CD8-positive, alpha-beta memory T cell (primary cell): ENCODE measurements at regions of chr10 and their contacts with region 1.

Region 1: GRCh38 chr10:122953827-122954730 is at the start of gene C10orf88:
- DNase-seq: peak; percentile 94 to 99 (median 96)
- H3K4me3 ChIP-seq: peak within 1 kb of the TSS; percentile 62
- H3K4me3 Mint-ChIP-seq: peak within 1 kb of the TSS; percentile 85 to 93 (median 91)
- H3K27ac ChIP-seq: peak within 1 kb of the TSS; percentile 8
- H3K27ac Mint-ChIP-seq: peak within 1 kb of the TSS; percentile 52 to 93 (median 84)
- H3K4me1 ChIP-seq: peaks cover 19% of the 10 kb centered on the region
- H3K4me1 Mint-ChIP-seq: peaks cover 28 to 54% (median 32%) of the 10 kb centered on the region in 3 donors
- H3K27me3 ChIP-seq: no peaks in the 10 kb centered on the region
- H3K27me3 Mint-ChIP-seq: peaks cover 0 to 2% of the 10 kb centered on the region in 2 donors
- total RNA-seq, gene C10orf88: 8.5 to 11.4 TPM

Region 2: DNA sequence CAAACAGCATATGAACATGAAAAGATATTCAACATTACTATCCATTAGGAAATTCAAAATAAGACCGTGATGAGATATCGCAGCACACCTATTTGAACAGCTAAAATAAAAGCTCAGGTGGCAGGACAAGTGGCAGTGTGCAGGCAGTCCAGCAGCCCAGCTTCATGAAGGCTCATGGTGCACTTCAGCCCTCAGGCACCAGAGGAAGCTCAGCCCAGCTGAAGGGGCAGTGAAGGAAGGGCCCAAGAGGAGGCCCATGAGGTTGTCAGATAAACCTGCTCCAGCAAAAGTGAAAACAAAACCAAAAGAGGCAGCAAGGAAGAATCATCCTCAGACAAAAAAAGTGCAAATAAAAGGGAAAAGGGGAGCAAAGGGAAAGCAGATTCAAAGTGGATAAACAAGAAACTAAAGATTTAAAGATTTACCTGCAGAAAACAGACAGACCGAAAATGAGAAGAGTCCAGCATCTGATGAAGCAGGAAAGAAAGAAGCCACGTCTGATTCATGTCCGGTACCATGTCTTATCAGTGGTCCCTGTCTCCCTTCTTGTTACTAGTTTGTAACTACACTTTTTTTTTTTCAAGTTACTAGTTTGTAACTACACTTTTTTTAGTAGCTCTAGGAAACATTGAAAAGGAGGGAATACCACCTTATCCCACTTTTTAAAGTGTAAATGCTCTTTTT is 59.7 kb before region 1 on chr10:
- CTCF ChIA-PET with region 1: no interaction called
- POLR2A ChIA-PET with region 1: no interaction called
- DNase-seq: no peak
- H3K4me3 ChIP-seq: no peak overlapping the region
- H3K4me3 Mint-ChIP-seq: no peak overlapping the region
- H3K27ac ChIP-seq: no peak overlapping the region
- H3K27ac Mint-ChIP-seq: no peak overlapping the region
- H3K4me1 ChIP-seq: no peaks in the 10 kb centered on the region
- H3K4me1 Mint-ChIP-seq: peaks cover 0 to 2% (median 0%) of the 10 kb centered on the region in 3 donors
- H3K27me3 ChIP-seq: no peaks in the 10 kb centered on the region
- H3K27me3 Mint-ChIP-seq: peaks cover 0 to 6% of the 10 kb centered on the region in 2 donors

Region 3: DNA sequence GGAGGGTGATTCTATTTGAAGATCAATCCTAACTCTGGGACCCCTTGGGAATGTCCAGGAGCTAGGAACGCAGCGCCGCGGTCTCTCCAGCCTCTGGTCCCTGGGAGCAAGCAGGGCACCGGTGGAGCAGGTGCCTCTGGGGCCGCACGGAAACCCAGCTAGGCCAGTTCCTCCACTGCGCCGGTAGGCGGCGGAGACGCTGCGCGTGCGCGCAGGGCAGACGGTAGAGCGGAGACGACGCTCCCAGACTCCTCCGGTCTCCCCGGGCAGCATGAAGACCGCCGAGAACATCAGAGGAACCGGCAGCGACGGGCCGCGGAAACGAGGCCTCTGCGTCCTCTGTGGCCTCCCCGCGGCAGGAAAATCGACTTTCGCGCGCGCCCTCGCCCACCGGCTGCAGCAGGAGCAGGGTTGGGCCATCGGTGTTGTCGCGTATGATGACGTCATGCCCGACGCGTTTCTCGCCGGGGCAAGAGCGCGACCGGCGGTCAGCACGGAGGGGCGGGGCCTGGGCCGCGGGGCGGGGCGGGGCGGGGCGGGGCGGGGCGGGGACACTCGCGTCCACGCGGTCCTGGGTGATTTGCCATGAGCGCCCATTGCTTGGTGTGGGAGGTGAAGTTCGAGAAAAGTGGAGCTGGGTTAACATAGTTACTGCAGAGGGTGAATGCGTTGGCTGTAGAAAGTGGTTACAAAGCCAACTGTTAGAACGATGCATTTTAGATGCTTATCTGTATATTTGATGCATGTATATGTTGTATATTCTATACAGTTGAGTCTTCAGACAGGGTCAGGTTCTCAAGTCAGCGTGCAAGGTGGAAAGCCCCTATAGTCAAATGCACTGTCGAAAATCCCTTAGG is 26.4 kb after region 1 on chr10 and contains the start of gene PSTK:
- CTCF ChIA-PET with region 1: interaction called, 16 read pairs
- POLR2A ChIA-PET with region 1: interaction called, 14 read pairs
- DNase-seq: peak; percentile 83 to 91 (median 88)
- H3K4me3 ChIP-seq: peak within 1 kb of the TSS; percentile 72
- H3K4me3 Mint-ChIP-seq: peak within 1 kb of the TSS; percentile 85 to 95 (median 90)
- H3K27ac ChIP-seq: peak within 1 kb of the TSS; percentile 91
- H3K27ac Mint-ChIP-seq: peak within 1 kb of the TSS; percentile 89 to 98 (median 96)
- H3K4me1 ChIP-seq: peaks cover 11% of the 10 kb centered on the region
- H3K4me1 Mint-ChIP-seq: peaks cover 12 to 25% (median 23%) of the 10 kb centered on the region in 3 donors
- H3K27me3 ChIP-seq: no peaks in the 10 kb centered on the region
- H3K27me3 Mint-ChIP-seq: peaks cover 0 to 4% of the 10 kb centered on the region in 2 donors
- total RNA-seq, gene PSTK: 5.8 TPM

Region 4: GRCh38 chr10:123203393-123204134 is 249.5 kb after region 1 on chr10:
- CTCF ChIA-PET with region 1: no interaction called
- POLR2A ChIA-PET with region 1: no interaction called
- DNase-seq: no peak
- H3K4me3 ChIP-seq: no peak overlapping the region
- H3K4me3 Mint-ChIP-seq: no peak overlapping the region
- H3K27ac ChIP-seq: no peak overlapping the region
- H3K27ac Mint-ChIP-seq: peak overlapping the region in 2 of 8 donors; percentile 29 to 52
- H3K4me1 ChIP-seq: peaks cover 6% of the 10 kb centered on the region
- H3K4me1 Mint-ChIP-seq: peaks cover 17 to 29% (median 27%) of the 10 kb centered on the region in 3 donors
- H3K27me3 ChIP-seq: no peaks in the 10 kb centered on the region
- H3K27me3 Mint-ChIP-seq: no peaks in the 10 kb centered on the region